Left colon (tissue), 2 donors: ENCODE measurements at regions of chr14 and their contacts with region 1.

Region 1: GRCh38 chr14:102235275-102235897 is 69.6 kb downstream of the MOK start:
- DNase-seq: peak; percentile 69 to 91
- ATAC-seq: peak; percentile 99

Region 2: DNA sequence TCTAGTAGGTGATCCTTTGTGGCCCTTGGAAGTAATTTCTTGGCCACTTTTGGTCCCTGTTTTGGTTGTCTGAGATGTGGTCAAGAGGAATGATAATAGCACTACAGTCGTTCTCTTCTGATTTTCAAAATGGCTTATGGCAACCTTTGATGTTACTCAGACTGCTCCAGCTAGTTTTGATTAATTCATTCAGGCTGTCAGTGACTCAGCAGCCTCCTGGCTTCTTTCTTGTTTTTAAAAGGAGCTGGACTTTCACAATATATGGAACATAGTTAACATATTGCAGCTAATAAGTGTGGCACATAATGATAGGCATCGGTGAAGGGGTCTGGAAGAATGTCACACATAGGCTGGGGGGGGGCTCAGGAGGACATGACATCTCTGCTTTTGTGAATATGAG is 48.3 kb before region 1 on chr14:
- intact Hi-C with region 1: no loop called
- DNase-seq: no peak
- ATAC-seq: no peak

Region 3: GRCh38 chr14:102314242-102315011 is 79.0 kb after region 1 on chr14:
- intact Hi-C with region 1: loop called in 1 of 2 experiments (anchors 5 kb)
- DNase-seq: peak; percentile 84 to 90
- ATAC-seq: peak; percentile 67